H1 (cell line): ENCODE measurements at regions of chr4 and their contacts with region 1.

Region 1: DNA sequence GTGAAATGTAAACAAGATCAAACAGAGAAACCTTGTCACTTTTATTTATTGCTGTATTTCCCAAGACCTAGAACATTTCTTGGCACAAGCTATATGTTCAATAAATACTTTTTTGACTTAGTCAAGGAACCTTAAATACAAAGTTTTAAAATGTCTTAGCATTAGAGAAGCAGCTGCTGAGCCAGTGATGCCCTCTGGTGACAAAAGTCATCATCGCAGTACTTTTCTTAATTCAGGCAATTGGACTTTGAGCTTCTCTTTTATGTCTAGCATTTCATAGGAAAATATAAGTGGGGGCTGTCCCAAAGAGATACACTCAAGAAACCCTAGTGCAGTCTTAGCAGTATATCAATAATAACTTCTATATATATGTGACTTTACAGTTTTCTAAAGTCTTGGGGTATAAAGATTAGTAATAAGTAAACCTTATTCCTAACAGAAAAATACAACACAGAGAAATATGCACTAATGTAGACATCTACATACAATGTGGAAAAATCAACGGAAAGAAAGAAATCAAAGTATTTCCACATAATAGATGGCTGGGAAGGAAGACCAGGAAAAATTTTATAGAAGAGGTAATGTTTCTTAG is 118.4 kb downstream of the DTHD1 start:
- DNase-seq: no peak
- H3K4me3 ChIP-seq: no peak overlapping the region
- H3K27ac ChIP-seq: no peak overlapping the region
- H3K4me1 ChIP-seq: no peaks in the 10 kb centered on the region
- H3K27me3 ChIP-seq: no peaks in the 10 kb centered on the region
- CTCF ChIP-seq: peak in 2 of 3 experiments; percentile 56 to 62; a peak in 3 of 4 replicates
- EP300 ChIP-seq: no peak
- POLR2A ChIP-seq: no peak
- RAD21 ChIP-seq: peak; percentile 75 to 76

Region 2: DNA sequence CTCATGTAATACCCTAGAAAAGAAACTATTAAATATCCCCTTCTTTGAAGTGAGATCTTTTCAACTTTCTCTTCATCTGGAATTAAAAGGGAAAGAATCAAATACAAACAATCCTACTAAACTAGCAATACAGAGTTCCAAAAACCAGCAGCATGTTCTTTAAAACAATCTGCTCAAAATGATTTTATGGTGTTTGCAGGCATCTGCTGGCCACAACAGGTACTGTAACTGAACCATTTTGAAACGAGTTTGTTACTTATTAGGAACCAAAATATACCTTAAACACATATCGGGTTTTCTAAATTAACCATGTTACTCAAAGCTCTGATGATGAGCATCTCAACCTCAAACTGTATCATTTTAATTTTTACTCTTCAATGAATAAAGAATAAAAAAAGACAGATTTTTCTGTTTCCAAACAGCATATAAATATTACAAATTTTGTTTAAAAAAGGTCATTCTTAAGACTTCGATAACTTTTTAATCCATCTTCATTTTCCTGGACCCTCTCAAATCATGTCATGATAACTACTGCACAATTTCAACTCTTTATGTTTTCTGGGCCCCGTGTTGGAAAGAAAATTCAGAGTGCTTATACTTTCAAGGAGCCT is 212.0 kb before region 1 on chr4:
- CTCF ChIA-PET with region 1: no interaction called
- POLR2A ChIA-PET with region 1: no interaction called
- DNase-seq: no peak
- H3K4me3 ChIP-seq: no peak overlapping the region
- H3K27ac ChIP-seq: no peak overlapping the region
- H3K4me1 ChIP-seq: no peaks in the 10 kb centered on the region; a peak in 1 of 7 replicates
- H3K27me3 ChIP-seq: no peaks in the 10 kb centered on the region
- CTCF ChIP-seq: peak in 2 of 3 experiments; percentile 59 to 62; a peak in 3 of 4 replicates
- EP300 ChIP-seq: no peak
- POLR2A ChIP-seq: no peak
- RAD21 ChIP-seq: peak; percentile 86 to 90

Region 3: DNA sequence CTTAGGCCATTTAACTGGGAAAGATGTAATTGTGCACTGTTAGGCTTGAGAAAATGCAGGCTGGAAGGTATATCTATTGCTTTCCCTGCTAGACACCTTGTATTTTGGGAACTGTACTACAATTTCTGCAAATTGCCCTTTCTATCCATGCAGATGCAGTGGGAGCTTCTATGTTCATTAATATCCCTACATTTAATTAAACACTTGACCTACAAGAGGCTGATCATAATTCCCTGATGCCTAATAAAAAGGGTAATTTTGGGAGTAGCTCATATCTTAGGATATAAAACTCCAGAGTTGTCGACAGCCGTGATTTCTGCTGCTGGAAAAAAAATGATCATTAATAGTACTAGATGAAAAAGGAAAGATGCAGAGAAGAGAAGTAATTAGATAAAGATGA is 98.7 kb before region 1 on chr4:
- CTCF ChIA-PET with region 1: no interaction called
- POLR2A ChIA-PET with region 1: no interaction called
- DNase-seq: no peak
- H3K4me3 ChIP-seq: no peak overlapping the region
- H3K27ac ChIP-seq: no peak overlapping the region
- H3K4me1 ChIP-seq: no peaks in the 10 kb centered on the region
- H3K27me3 ChIP-seq: no peaks in the 10 kb centered on the region
- CTCF ChIP-seq: no peak
- EP300 ChIP-seq: no peak
- POLR2A ChIP-seq: no peak
- RAD21 ChIP-seq: no peak

Region 4: DNA sequence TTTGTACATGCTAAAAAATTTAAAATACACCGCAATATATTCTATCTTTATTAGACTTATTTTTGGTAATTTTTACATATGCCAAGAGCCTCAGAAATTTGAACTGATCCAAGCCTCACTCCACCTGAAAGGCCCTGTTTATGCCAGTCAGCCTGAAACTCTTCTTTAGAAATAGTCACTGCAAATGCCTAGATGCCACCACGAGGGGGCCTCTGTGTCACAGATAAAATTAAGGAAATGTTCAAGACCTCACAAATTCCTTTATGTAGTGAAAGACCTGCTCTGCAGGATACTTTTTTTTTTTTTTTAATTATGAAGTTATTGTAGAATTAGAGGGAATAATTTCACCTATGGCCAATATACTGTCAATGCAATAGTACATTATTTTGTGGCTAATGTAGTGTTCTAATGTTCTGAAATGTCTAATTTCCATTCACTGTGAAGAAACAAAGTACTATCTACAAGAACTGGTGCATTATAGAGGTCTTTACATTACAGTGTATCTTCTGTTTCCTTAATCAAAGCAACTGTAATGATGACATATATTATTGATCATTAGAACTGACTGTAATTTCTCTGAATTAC is 48.7 kb before region 1 on chr4:
- CTCF ChIA-PET with region 1: interaction called, 36 read pairs
- POLR2A ChIA-PET with region 1: no interaction called
- DNase-seq: peak; percentile 9 to 60
- H3K4me3 ChIP-seq: no peak overlapping the region
- H3K27ac ChIP-seq: no peak overlapping the region
- H3K4me1 ChIP-seq: peaks cover 0 to 4% (median 0%) of the 10 kb centered on the region in 4 experiments; a peak in 1 of 7 replicates
- H3K27me3 ChIP-seq: no peaks in the 10 kb centered on the region
- CTCF ChIP-seq: peak in 2 of 3 experiments; percentile 61 to 72; a peak in 3 of 4 replicates
- EP300 ChIP-seq: no peak
- POLR2A ChIP-seq: no peak
- RAD21 ChIP-seq: peak; percentile 78 to 85

Region 5: GRCh38 chr4:36374836-36375401 is 24.9 kb before region 1 on chr4:
- CTCF ChIA-PET with region 1: interaction called, 14 read pairs
- POLR2A ChIA-PET with region 1: no interaction called
- DNase-seq: no peak
- H3K4me3 ChIP-seq: no peak overlapping the region
- H3K27ac ChIP-seq: no peak overlapping the region
- H3K4me1 ChIP-seq: no peaks in the 10 kb centered on the region
- H3K27me3 ChIP-seq: no peaks in the 10 kb centered on the region
- CTCF ChIP-seq: no peak
- EP300 ChIP-seq: no peak
- POLR2A ChIP-seq: no peak
- RAD21 ChIP-seq: no peak

Region 6: GRCh38 chr4:36385951-36386571 is 13.8 kb before region 1 on chr4:
- CTCF ChIA-PET with region 1: interaction called, 31 read pairs
- POLR2A ChIA-PET with region 1: no interaction called
- DNase-seq: no peak
- H3K4me3 ChIP-seq: no peak overlapping the region
- H3K27ac ChIP-seq: no peak overlapping the region
- H3K4me1 ChIP-seq: no peaks in the 10 kb centered on the region
- H3K27me3 ChIP-seq: no peaks in the 10 kb centered on the region
- CTCF ChIP-seq: no peak
- EP300 ChIP-seq: no peak
- POLR2A ChIP-seq: no peak
- RAD21 ChIP-seq: no peak

Region 7: GRCh38 chr4:36414248-36414647 is 14.4 kb after region 1 on chr4:
- CTCF ChIA-PET with region 1: interaction called, 11 read pairs
- POLR2A ChIA-PET with region 1: no interaction called
- DNase-seq: no peak
- H3K4me3 ChIP-seq: no peak overlapping the region
- H3K27ac ChIP-seq: no peak overlapping the region
- H3K4me1 ChIP-seq: no peaks in the 10 kb centered on the region
- H3K27me3 ChIP-seq: no peaks in the 10 kb centered on the region
- CTCF ChIP-seq: peak in 1 of 3 experiments; percentile 23; a peak in 2 of 4 replicates
- EP300 ChIP-seq: no peak
- POLR2A ChIP-seq: no peak
- RAD21 ChIP-seq: peak; percentile 54 to 59

Region 8: GRCh38 chr4:36824682-36825081 is 424.8 kb after region 1 on chr4:
- CTCF ChIA-PET with region 1: interaction called, 10 read pairs
- POLR2A ChIA-PET with region 1: no interaction called
- DNase-seq: no peak
- H3K4me3 ChIP-seq: no peak overlapping the region
- H3K27ac ChIP-seq: no peak overlapping the region
- H3K4me1 ChIP-seq: no peaks in the 10 kb centered on the region
- H3K27me3 ChIP-seq: no peaks in the 10 kb centered on the region
- CTCF ChIP-seq: peak in 2 of 3 experiments; percentile 72 to 79; a peak in 3 of 4 replicates
- EP300 ChIP-seq: no peak
- POLR2A ChIP-seq: no peak
- RAD21 ChIP-seq: peak; percentile 69 to 81